ENCODE measurements at regions of chr15 and their contacts with region 1.

Region 1: DNA sequence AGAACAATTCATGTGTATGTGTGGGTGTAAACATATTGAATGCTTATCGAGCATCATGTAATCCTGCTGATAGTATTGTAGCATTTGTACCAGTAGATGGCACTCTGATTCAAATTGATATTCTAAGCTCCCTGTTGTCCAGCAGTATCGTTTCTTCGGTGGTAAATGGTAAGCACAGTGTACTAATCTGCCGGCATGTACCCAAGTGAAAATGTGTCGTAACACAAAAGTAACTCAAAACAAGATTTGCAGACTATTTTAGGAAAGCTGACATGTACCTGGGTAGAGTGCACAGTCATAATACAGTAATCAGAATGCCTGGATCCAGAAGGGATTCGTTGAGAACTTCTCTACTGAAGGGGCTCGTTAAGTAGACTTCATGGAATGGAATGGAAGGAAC is 31.7 kb upstream of the MNS1 start:
- DNase-seq: peak; percentile 67
- ATAC-seq: peak; percentile 98
- H3K4me3 ChIP-seq: no peak overlapping the region
- H3K27ac ChIP-seq: no peak overlapping the region
- H3K4me1 ChIP-seq: peaks cover 0 to 5% of the 10 kb centered on the region in 2 experiments; a peak in 1 of 4 replicates
- H3K27me3 ChIP-seq: no peaks in the 10 kb centered on the region
- CTCF ChIP-seq: peak; percentile 52 to 75 (median 63); a peak in 5 of 6 replicates
- POLR2A ChIP-seq: no peak
- RAD21 ChIP-seq: peak; percentile 81

Region 2: DNA sequence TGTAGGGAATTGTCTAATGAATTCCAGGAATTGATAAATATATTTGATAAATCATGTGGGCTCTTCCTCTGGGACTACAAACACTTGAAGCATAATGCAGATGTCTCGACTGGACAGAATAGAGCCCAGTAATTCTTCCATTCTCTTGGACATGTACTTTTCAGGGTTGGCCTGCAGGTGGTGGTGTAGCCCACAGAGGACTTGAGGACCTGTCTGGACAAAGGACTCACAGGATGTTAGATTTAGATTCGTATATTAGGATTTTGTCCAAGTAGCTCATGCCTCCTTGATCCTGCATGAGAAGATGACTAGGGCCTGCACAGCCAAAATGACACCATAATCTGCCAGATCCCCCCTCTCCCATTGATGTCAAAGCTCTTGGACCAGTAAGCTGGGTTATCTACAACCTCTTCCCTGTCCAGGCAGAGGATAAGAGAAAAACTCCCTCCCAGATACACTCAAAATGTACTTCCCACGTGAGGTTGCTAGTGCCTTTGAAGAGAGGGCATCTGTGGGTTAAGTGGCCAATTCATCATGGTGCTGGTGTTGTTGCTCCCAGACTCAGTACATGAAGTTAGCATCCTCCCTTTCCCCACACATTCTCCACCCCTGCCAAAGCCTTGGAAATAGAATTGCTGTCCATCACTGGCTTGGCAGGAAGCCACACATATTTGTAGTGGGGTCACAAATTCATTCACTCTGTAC is 325.2 kb after region 1 on chr15:
- CTCF ChIA-PET with region 1: interaction called, 6 read pairs
- POLR2A ChIA-PET with region 1: no interaction called
- RAD21 ChIA-PET with region 1: no interaction called
- intact Hi-C with region 1: loop called (anchors 5 kb)
- DNase-seq: peak; percentile 48
- ATAC-seq: peak; percentile 91
- H3K4me3 ChIP-seq: no peak overlapping the region
- H3K27ac ChIP-seq: no peak overlapping the region
- H3K4me1 ChIP-seq: peaks cover 18 to 28% of the 10 kb centered on the region in 2 experiments
- H3K27me3 ChIP-seq: no peaks in the 10 kb centered on the region
- CTCF ChIP-seq: peak; percentile 56 to 73 (median 73); a peak in 5 of 6 replicates
- POLR2A ChIP-seq: no peak
- RAD21 ChIP-seq: peak; percentile 85

Region 3: GRCh38 chr15:56869573-56869972 is 372.9 kb after region 1 on chr15:
- CTCF ChIA-PET with region 1: interaction called, 57 read pairs
- POLR2A ChIA-PET with region 1: no interaction called
- RAD21 ChIA-PET with region 1: interaction called, 5 to 6 read pairs
- intact Hi-C with region 1: loop called (anchors 1 kb)
- DNase-seq: peak; percentile 33
- ATAC-seq: no peak
- H3K4me3 ChIP-seq: no peak overlapping the region
- H3K27ac ChIP-seq: no peak overlapping the region
- H3K4me1 ChIP-seq: peaks cover 6 to 11% of the 10 kb centered on the region in 2 experiments; a peak in 3 of 4 replicates
- H3K27me3 ChIP-seq: no peaks in the 10 kb centered on the region
- CTCF ChIP-seq: peak; percentile 52 to 75 (median 58); a peak in 5 of 6 replicates
- POLR2A ChIP-seq: no peak
- RAD21 ChIP-seq: peak; percentile 80

Region 4: DNA sequence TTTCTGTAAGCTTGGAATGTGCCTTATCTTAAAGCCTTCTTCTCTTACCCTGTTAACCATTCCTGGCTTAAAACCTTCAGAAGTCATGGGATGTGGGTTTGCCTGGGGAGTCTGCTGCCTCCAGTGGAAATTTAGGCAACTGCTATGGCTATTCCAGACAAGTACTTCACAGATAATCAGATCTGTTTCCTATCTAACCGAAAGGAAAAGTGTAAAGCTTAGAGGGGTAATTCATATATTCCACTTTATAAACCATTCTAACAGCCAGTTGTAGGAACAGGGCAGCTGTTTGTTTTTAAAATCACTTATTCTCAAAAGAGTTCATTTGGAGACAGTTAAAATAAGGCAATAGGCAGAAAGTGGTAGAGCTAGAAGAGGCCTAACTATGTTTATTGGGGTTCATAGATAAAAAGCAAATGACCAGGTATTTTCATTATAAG is 641.7 kb after region 1 on chr15:
- CTCF ChIA-PET with region 1: interaction called, 3 read pairs
- POLR2A ChIA-PET with region 1: no interaction called
- RAD21 ChIA-PET with region 1: no interaction called
- intact Hi-C with region 1: loop called (anchors 5 kb)
- DNase-seq: peak; percentile 33
- ATAC-seq: peak; percentile 95
- H3K4me3 ChIP-seq: no peak overlapping the region
- H3K27ac ChIP-seq: no peak overlapping the region
- H3K4me1 ChIP-seq: no peaks in the 10 kb centered on the region
- H3K27me3 ChIP-seq: no peaks in the 10 kb centered on the region
- CTCF ChIP-seq: peak; percentile 21 to 88 (median 82); a peak in 5 of 6 replicates
- POLR2A ChIP-seq: no peak
- RAD21 ChIP-seq: peak; percentile 46

Region 5: GRCh38 chr15:57213862-57214261 is 717.2 kb after region 1 on chr15:
- CTCF ChIA-PET with region 1: no interaction called
- POLR2A ChIA-PET with region 1: no interaction called
- RAD21 ChIA-PET with region 1: no interaction called
- intact Hi-C with region 1: loop called (anchors 5 kb)
- DNase-seq: peak; percentile 21
- ATAC-seq: peak; percentile 74
- H3K4me3 ChIP-seq: no peak overlapping the region
- H3K27ac ChIP-seq: no peak overlapping the region
- H3K4me1 ChIP-seq: peaks cover 8 to 9% of the 10 kb centered on the region in 2 experiments; a peak in 3 of 4 replicates
- H3K27me3 ChIP-seq: no peaks in the 10 kb centered on the region
- CTCF ChIP-seq: peak in 2 of 3 experiments; percentile 41 to 55; a peak in 3 of 6 replicates
- POLR2A ChIP-seq: no peak
- RAD21 ChIP-seq: peak; percentile 74